Right lobe of liver (tissue), 6 donors: ENCODE measurements at regions of chr1 and their contacts with region 1.

Region 1: GRCh38 chr1:6396998-6397397 is 3.4 kb upstream of the ACOT7 start:
- DNase-seq: no peak
- ATAC-seq: no peak
- H3K4me3 ChIP-seq: no peak overlapping the region
- H3K27ac ChIP-seq: no peak overlapping the region
- H3K4me1 ChIP-seq: peaks cover 0 to 14% (median 2%) of the 10 kb centered on the region in 4 donors
- H3K27me3 ChIP-seq: no peaks in the 10 kb centered on the region
- CTCF ChIP-seq: peak in 1 of 4 donors; percentile 9
- POLR2A ChIP-seq: no peak

Region 2: DNA sequence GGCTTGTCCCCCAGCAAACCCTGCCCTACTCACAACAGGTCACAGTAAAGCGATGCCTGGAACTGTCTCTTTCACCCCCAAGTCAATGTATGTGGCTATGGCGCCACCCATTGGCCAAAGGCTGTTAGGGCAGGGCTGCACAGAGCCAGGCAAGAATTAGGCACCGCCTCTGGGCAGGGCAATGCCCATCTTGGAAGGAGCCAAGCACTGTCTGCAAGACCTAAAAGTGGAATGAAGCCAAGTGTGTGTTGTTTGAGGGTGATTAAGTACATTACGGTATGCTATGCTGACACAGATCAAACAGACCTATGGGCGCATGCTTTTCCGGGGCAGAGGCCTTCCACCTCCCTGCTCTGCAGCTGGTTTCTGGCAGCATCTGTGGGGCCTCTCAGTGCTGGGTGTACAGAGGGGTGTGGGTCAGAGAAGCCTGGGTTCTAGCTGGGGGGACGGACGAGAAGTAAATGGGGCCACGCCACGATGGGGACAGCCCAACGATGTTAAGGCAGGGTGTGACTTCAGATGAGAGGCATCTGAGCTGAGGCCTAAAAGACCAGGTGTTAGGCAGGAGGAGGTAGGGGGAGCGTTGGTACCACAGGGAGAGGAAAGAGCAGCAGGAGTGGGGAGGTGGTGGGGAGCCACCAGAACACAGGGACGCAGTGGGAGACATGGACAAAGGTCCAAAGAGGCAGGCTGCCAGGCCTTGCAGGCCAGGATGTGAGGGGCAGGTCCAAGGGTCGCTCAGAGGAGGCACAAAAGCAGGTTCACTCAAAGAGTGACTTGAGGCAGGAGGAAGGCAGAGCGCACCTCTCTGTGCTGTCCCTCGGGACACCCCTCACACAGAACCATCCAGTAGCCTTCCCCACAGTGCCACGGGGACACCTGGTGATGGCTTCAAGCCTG is 53.2 kb before region 1 on chr1:
- intact Hi-C with region 1: loop called (anchors 5 kb)
- DNase-seq: peak in 1 of 3 donors; percentile 66
- ATAC-seq: peak; percentile 68 to 84 (median 75)
- H3K4me3 ChIP-seq: no peak overlapping the region
- H3K27ac ChIP-seq: no peak overlapping the region
- H3K4me1 ChIP-seq: peaks cover 0 to 4% (median 0%) of the 10 kb centered on the region in 4 donors
- H3K27me3 ChIP-seq: no peaks in the 10 kb centered on the region
- CTCF ChIP-seq: peak; percentile 62 to 85 (median 76)
- POLR2A ChIP-seq: no peak

Region 3: GRCh38 chr1:6359216-6360116 is 37.5 kb before region 1 on chr1:
- intact Hi-C with region 1: loop called in 1 of 2 experiments (anchors 5 kb)
- DNase-seq: peak; percentile 88 to 93 (median 93)
- ATAC-seq: peak; percentile 87 to 89 (median 88)
- H3K4me3 ChIP-seq: peak overlapping the region in 1 of 3 donors; percentile 9
- H3K27ac ChIP-seq: peak overlapping the region; percentile 66 to 88 (median 80)
- H3K4me1 ChIP-seq: peaks cover 0 to 57% (median 24%) of the 10 kb centered on the region in 4 donors
- H3K27me3 ChIP-seq: no peaks in the 10 kb centered on the region
- CTCF ChIP-seq: peak in 2 of 4 donors; percentile 12 to 18
- POLR2A ChIP-seq: peak; percentile 48

Region 4: GRCh38 chr1:6454856-6455751 is 58.1 kb after region 1 on chr1:
- intact Hi-C with region 1: no loop called
- DNase-seq: no peak
- ATAC-seq: no peak
- H3K4me3 ChIP-seq: no peak overlapping the region
- H3K27ac ChIP-seq: no peak overlapping the region
- H3K4me1 ChIP-seq: peaks cover 0 to 18% (median 2%) of the 10 kb centered on the region in 4 donors
- H3K27me3 ChIP-seq: no peaks in the 10 kb centered on the region
- CTCF ChIP-seq: no peak
- POLR2A ChIP-seq: no peak